ENCODE measurements at regions of chr13 and their contacts with region 1.

Region 1: DNA sequence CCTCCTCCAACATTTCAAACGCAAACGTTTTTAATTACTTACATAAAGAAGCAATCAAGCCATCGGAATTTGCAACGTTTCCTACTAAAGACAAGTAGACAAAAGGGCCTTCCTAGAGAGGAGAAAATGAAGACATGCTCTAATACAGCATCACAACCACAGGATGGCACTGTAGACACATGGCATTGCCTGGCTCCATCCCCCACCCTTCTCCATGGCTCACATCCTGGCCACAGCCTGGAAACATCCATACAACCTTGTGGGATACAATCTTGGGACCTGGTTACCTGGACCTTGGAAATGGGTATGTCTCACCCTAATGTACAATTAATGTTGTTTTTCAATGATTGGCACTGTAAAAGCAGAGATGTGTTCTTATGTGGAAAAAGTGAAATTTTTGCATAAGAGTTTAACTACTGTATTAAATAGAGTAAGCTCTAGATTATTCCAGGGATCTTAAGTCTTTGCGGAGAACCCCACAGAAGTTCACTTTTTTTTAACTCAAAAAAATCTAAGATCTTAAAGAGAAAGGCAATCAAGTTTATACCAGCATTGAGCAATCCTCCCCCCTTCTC is 21.5 kb downstream of the EBPL start:
- DNase-seq: peak; percentile 49 to 66
- ATAC-seq: peak; percentile 100

Region 2: DNA sequence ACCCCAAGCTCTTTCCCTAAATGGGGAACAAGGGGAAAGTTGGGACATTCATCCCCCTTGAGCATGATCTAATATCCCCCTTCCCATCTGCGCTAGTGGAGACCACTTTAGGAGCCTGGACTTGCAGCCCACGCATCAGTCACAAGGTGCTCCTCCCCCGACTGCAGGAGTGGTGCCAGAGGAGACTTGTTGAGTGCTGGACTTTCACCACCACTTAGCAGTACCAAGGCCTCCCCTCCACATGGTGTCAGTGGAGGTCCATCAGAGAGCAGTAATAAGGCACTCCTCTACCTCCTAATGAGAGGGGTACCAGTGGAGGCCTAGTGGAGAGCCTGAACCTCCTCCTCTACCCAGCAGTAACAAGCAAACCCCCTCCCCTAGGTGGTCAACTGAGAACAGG is 248.4 kb before region 1 on chr13:
- intact Hi-C with region 1: no loop called
- DNase-seq: peak in 1 of 2 donors; percentile 10
- ATAC-seq: no peak

Region 3: DNA sequence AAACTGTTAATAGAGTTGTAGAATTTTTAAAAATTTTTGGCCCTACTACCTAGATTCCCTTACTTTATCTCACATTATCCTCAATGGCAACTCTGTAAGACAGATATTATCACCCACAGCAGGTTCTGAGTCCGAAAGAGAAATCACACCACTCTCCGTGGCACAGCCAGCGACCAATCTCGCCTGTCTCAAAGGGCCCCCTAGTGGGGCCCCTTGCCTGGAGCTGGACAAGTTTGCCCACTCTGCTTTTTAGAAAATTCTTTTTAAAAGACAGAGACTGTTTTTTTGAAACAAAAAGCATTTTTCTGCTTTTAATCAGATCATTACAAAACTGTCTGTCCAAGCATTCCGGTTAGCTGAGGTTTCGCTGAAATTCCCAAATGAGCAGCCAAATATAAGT is 152.4 kb before region 1 on chr13:
- intact Hi-C with region 1: no loop called
- DNase-seq: no peak
- ATAC-seq: no peak

Region 4: GRCh38 chr13:49840266-49840665 is 170.4 kb after region 1 on chr13:
- intact Hi-C with region 1: loop called in 1 of 2 experiments (anchors 5 kb)
- DNase-seq: no peak
- ATAC-seq: no peak